K562 (cell line): ENCODE measurements at regions of chr5 and their contacts with region 1.

Region 1: GRCh38 chr5:160240350-160240749 is 11.0 kb downstream of the FABP6 start:
- DNase-seq: peak in 2 of 4 experiments; percentile 45 to 69
- ATAC-seq: peak; percentile 67
- H3K4me3 ChIP-seq: no peak overlapping the region
- H3K27ac ChIP-seq: no peak overlapping the region
- H3K4me1 ChIP-seq: peaks cover 17 to 22% of the 10 kb centered on the region in 2 experiments
- H3K27me3 ChIP-seq: peaks cover 0 to under 1% of the 10 kb centered on the region in 2 experiments; a peak in 1 of 5 replicates
- CTCF ChIP-seq: no peak
- EP300 ChIP-seq: no peak
- POLR2A ChIP-seq: no peak
- RAD21 ChIP-seq: no peak

Region 2: DNA sequence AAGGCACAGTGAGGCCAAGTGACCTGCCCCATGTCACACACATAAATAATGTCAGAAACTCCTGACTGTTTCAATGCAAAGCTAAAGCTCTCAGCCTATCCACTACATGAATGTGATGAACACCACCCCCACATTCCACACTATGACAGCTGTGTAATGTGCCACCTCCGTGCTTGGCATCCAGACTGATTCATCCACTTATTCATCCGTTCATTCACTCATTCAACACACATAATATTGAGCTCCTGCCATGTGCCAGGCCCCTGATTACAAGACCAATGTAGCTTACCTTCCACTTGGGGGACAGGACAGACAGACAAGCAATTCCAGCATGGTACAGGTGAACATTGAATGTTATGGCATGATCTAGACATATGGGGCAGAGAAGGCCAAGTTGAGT is 57.3 kb before region 1 on chr5:
- CTCF ChIA-PET with region 1: no interaction called
- POLR2A ChIA-PET with region 1: no interaction called
- in situ Hi-C with region 1: no loop called
- intact Hi-C with region 1: no loop called
- DNase-seq: no peak
- ATAC-seq: no peak
- H3K4me3 ChIP-seq: no peak overlapping the region
- H3K27ac ChIP-seq: no peak overlapping the region
- H3K4me1 ChIP-seq: 0 out of 5 replicates have a peak, but pooled peaks cover 0 to 5% of the 10 kb centered on the region in 2 experiments
- H3K27me3 ChIP-seq: peaks cover 0 to 8% of the 10 kb centered on the region in 2 experiments; a peak in 2 of 5 replicates
- CTCF ChIP-seq: no peak
- EP300 ChIP-seq: no peak
- POLR2A ChIP-seq: no peak
- RAD21 ChIP-seq: no peak

Region 3: DNA sequence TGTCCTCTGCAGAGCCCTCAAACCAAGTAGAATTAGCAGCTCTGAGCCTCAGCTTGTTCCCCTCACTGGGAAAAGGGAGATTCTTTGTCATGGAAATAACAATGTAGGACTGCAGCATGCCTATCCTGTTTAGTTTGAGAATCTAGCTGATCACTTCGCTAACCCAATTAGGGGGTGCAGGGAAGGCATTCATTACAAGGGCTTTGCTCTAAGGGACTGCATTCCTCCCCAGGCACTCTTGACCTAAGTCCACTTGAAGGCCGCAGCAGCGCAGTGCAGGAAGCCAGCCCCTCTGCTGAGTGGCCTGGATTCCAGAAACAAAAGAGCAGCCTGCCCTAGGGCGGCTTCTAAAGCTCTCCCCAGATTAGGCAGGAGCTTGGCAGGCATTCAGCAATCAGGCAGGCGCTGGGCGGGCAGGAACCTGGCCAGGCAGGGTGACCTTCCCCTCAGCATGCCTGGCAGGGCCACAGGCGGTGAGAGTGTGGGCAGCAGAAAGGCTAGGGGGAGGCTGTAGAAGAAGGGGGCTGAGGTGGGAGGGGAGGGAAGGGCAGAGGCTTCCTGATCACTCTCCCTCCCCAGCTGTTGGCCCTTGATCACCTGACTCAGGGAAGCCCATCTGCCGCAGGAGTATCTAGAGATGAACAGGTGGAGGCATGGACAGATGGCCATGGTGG is 47.2 kb after region 1 on chr5:
- CTCF ChIA-PET with region 1: no interaction called
- POLR2A ChIA-PET with region 1: no interaction called
- in situ Hi-C with region 1: no loop called
- intact Hi-C with region 1: loop called (anchors 5 kb)
- DNase-seq: no peak
- ATAC-seq: peak; percentile 54
- H3K4me3 ChIP-seq: no peak overlapping the region
- H3K27ac ChIP-seq: no peak overlapping the region
- H3K4me1 ChIP-seq: peaks cover 0 to 4% of the 10 kb centered on the region in 2 experiments; a peak in 1 of 5 replicates
- H3K27me3 ChIP-seq: peaks cover 41 to 55% of the 10 kb centered on the region in 2 experiments
- CTCF ChIP-seq: no peak
- EP300 ChIP-seq: no peak
- POLR2A ChIP-seq: no peak
- RAD21 ChIP-seq: no peak